IMR-90 (cell line): ENCODE measurements at regions of chr1 and their contacts with region 1.

Region 1: GRCh38 chr1:171081314-171081753 is 9.4 kb upstream of the FMO3 start:
- DNase-seq: peak; percentile 64
- ATAC-seq: peak; percentile 93
- H3K4me3 ChIP-seq: no peak overlapping the region
- H3K27ac ChIP-seq: peak overlapping the region; percentile 73; the same call in 1 of the 2 replicates
- H3K4me1 ChIP-seq: peaks cover 5% of the 10 kb centered on the region; the same call in 1 of the 2 replicates
- H3K27me3 ChIP-seq: no peaks in the 10 kb centered on the region
- CTCF ChIP-seq: peak; percentile 65
- POLR2A ChIP-seq: no peak
- RAD21 ChIP-seq: peak; percentile 62

Region 2: DNA sequence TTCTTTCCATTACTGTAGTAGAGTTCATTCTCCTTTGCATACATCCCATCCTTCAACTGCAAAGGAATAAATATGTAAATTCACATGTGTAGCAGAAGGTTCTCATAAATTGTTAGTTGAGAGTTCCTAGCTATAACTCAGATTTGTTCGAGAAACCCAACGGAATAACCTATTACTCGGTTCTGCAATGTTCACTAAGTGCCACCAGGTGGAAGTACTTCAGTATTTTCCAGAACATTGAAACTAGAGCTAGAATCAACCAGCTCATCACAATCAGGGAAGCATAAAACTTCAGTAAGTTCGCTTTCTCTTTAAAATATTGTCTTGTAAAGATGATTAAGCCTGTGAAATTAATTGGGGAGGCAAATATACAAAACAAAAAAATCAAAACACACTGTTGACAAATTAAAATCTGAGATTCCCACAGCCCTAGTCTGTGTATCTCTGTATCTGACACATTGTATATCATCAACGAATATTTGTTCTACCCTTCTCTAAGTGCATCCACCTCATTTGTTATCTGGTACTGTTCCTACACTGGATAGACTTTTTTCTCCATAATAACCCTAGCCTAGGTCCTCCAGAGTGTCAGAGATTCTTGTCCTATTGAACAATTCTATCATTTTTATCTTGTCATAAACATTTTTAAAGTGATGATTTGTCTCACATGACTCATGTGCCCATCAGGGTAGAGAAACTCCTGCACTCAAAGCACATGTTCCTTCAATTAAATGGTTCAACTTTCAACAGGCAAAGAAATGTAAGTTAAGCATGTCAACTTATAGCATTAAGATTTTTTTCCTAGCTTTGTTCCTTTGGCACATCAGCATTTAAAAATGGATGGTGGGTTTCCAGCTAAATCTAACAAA is 114.1 kb before region 1 on chr1:
- CTCF ChIA-PET with region 1: no interaction called
- POLR2A ChIA-PET with region 1: no interaction called
- dilution Hi-C with region 1: no loop called
- in situ Hi-C with region 1: no loop called
- intact Hi-C with region 1: loop called (anchors 2 kb)
- DNase-seq: peak; percentile 63
- ATAC-seq: peak; percentile 94
- H3K4me3 ChIP-seq: no peak overlapping the region
- H3K27ac ChIP-seq: no peak overlapping the region
- H3K4me1 ChIP-seq: no peaks in the 10 kb centered on the region
- H3K27me3 ChIP-seq: no peaks in the 10 kb centered on the region
- CTCF ChIP-seq: peak; percentile 68
- POLR2A ChIP-seq: no peak
- RAD21 ChIP-seq: peak; percentile 60

Region 3: DNA sequence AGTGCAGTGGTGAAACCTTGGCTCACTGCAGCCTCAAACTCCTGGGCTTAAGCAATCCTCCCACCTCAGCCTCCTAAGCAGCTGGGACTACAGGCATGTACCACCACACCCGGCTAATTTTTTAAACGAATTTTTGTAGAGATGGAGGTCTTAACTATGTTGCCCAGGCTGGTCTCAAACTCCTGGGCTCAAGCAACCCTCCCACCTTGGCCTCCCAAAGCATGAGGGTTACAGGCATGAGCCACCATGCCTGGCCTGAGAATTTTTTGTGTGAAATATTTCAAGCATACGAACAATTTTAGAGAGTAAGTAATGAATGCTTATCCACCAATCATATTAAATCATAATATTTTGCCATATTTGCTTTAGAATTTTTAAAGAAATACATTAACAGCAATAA is 94.4 kb before region 1 on chr1:
- CTCF ChIA-PET with region 1: no interaction called
- POLR2A ChIA-PET with region 1: no interaction called
- dilution Hi-C with region 1: no loop called
- in situ Hi-C with region 1: no loop called
- intact Hi-C with region 1: no loop called
- DNase-seq: no peak
- ATAC-seq: no peak
- H3K4me3 ChIP-seq: no peak overlapping the region
- H3K27ac ChIP-seq: no peak overlapping the region
- H3K4me1 ChIP-seq: no peaks in the 10 kb centered on the region
- H3K27me3 ChIP-seq: no peaks in the 10 kb centered on the region
- CTCF ChIP-seq: no peak
- POLR2A ChIP-seq: no peak
- RAD21 ChIP-seq: no peak

Region 4: DNA sequence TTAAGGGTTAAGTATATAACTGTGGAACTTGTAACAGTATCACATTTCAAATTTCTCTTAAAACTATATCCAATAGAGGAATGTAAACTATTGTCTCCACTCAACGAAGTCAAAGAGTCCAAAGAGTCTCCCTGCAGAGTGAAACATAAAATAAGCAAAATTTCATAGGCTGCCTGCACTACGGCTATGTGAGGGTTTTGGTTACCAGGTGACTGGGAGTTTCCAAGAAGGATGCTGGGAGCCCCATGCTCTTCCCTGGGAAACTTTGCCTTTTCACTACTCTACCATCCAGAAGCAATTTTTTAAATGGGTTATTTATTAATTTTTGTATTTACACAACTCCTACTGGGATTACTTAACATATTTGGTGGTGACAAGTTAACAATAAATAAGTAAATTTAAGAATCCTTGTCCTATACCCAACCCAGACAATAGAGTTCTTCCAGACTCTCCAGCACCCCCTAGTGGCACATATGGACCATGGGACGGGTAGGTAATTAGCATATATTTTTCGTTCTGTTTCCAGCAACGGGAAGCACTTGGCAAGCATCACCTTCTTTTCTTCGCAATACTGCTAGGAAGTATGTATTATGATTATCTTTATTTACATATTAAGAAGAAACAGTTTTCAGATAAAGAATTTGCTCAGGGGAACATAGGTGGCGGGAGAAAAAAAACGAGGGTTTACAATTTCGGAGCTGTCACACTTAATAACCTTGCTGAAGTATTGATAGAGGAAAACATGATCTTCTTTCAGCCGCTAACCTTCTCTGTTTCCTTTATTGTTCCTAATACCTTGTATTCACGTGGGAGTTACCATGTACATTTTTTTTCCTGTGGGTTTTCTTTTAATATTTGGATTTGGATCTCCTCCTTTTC is 107.3 kb after region 1 on chr1:
- CTCF ChIA-PET with region 1: interaction called, 6 read pairs
- POLR2A ChIA-PET with region 1: no interaction called
- dilution Hi-C with region 1: no loop called
- in situ Hi-C with region 1: loop called (anchors 10 kb)
- intact Hi-C with region 1: loop called (anchors 1 kb)
- DNase-seq: peak; percentile 65
- ATAC-seq: peak; percentile 80
- H3K4me3 ChIP-seq: no peak overlapping the region
- H3K27ac ChIP-seq: peak overlapping the region; percentile 17; the same call in 1 of the 2 replicates
- H3K4me1 ChIP-seq: peaks cover 2% of the 10 kb centered on the region; the same call in 1 of the 2 replicates
- H3K27me3 ChIP-seq: no peaks in the 10 kb centered on the region
- CTCF ChIP-seq: peak; percentile 73
- POLR2A ChIP-seq: no peak
- RAD21 ChIP-seq: peak; percentile 64

Region 5: GRCh38 chr1:171226747-171227370 is 145.5 kb after region 1 on chr1:
- CTCF ChIA-PET with region 1: interaction called, 55 read pairs
- POLR2A ChIA-PET with region 1: interaction called, 4 read pairs
- dilution Hi-C with region 1: no loop called
- in situ Hi-C with region 1: loop called (anchors 5 kb)
- intact Hi-C with region 1: loop called (anchors 1 kb)
- DNase-seq: peak; percentile 80
- ATAC-seq: peak; percentile 93
- H3K4me3 ChIP-seq: no peak overlapping the region
- H3K27ac ChIP-seq: no peak overlapping the region
- H3K4me1 ChIP-seq: peaks cover 2% of the 10 kb centered on the region
- H3K27me3 ChIP-seq: no peaks in the 10 kb centered on the region
- CTCF ChIP-seq: peak; percentile 95
- POLR2A ChIP-seq: no peak
- RAD21 ChIP-seq: peak; percentile 99

Region 6: GRCh38 chr1:171313835-171314320 is 232.5 kb after region 1 on chr1 and contains the start of gene FMO4:
- CTCF ChIA-PET with region 1: interaction called, 5 read pairs
- POLR2A ChIA-PET with region 1: no interaction called
- dilution Hi-C with region 1: no loop called
- in situ Hi-C with region 1: no loop called
- intact Hi-C with region 1: loop called (anchors 5 kb)
- DNase-seq: peak; percentile 99
- ATAC-seq: peak; percentile 100
- H3K4me3 ChIP-seq: no peak within 1 kb of the TSS
- H3K27ac ChIP-seq: no peak within 1 kb of the TSS
- H3K4me1 ChIP-seq: 0 out of 2 replicates have a peak, but pooled peaks cover 2% of the 10 kb centered on the region
- H3K27me3 ChIP-seq: no peaks in the 10 kb centered on the region
- CTCF ChIP-seq: peak; percentile 92
- POLR2A ChIP-seq: no peak
- RAD21 ChIP-seq: peak; percentile 62
- total RNA-seq, gene FMO4: 0.36 and 0.56 TPM in 2 replicates

Region 7: DNA sequence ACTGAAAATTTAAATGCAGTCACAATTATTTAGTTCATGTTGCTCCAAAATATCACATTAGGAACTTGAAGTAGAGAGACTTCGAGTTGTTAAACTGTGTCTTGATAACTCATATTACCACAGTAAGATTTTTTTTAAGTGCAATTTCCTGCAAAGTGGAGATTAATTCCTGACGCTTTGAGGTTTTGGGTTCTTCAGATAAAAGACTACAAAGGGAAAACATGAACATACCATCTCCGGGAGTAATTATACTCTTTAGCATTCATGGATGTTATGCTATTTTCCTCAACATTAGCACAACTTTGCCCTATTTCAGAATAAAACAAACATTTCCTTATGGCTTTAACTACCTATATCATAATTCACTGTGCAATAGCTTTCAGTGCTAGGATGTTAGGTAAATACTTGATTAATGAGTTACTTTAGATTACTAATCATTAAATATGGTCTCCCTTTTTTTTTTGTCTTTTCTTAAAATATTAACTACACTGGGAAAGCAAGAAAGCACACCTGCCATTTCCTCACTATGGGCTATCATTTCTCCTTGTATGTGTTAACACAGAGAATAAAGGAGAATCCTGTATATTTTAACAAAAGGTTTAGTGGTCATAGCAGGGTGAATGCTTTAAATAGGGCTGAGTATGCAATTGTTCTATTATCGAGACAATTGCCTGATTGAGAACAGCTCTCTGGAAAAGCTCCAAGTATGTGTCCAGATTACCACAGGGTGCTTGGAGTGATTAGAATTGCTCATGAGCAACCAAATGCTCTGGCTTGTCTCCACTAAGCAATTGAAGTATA is 1086.7 kb after region 1 on chr1:
- CTCF ChIA-PET with region 1: no interaction called
- POLR2A ChIA-PET with region 1: no interaction called
- dilution Hi-C with region 1: no loop called
- in situ Hi-C with region 1: no loop called
- intact Hi-C with region 1: no loop called
- DNase-seq: peak; percentile 81
- ATAC-seq: no peak; the same call in 1 of the 2 replicates
- H3K4me3 ChIP-seq: no peak overlapping the region
- H3K27ac ChIP-seq: no peak overlapping the region
- H3K4me1 ChIP-seq: peaks cover 4% of the 10 kb centered on the region; the same call in 1 of the 2 replicates
- H3K27me3 ChIP-seq: no peaks in the 10 kb centered on the region
- CTCF ChIP-seq: no peak
- POLR2A ChIP-seq: no peak
- RAD21 ChIP-seq: no peak